Natural killer cell (primary cell): ENCODE measurements at regions of chr9 and their contacts with region 1.

Region 1: DNA sequence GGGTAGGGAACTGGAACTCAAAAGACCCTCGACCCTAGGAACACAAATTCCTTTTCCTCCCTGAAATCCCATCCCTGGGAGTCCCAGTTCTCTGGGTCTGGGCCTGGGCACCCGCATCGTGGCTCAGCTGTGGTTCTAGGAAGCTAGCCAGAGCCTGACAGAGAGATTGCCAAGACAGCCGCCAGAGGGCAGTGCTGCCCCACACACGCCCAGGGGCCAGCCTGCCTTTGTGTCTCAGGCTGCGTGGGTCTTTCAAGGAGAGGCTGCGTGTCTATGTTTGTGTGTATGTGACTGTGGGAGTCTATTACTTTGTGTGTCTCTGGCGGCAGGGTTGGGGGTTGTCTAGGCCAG is 32.0 kb upstream of the TTLL11 start:
- DNase-seq: peak; percentile 78 to 88
- ATAC-seq: peak; percentile 72 to 80 (median 80)
- H3K4me3 ChIP-seq: no peak overlapping the region
- H3K4me3 Mint-ChIP-seq: peak overlapping the region; percentile 80
- H3K27ac ChIP-seq: no peak overlapping the region
- H3K27ac Mint-ChIP-seq: peak overlapping the region in 1 of 2 donors; percentile 62
- H3K4me1 ChIP-seq: peaks cover 35% of the 10 kb centered on the region
- H3K4me1 Mint-ChIP-seq: peaks cover 14 to 30% of the 10 kb centered on the region in 2 donors
- H3K27me3 ChIP-seq: peaks cover 7% of the 10 kb centered on the region
- H3K27me3 Mint-ChIP-seq: peaks cover 13 to 25% of the 10 kb centered on the region in 2 donors
- CTCF ChIP-seq: peak; percentile 82

Region 2: DNA sequence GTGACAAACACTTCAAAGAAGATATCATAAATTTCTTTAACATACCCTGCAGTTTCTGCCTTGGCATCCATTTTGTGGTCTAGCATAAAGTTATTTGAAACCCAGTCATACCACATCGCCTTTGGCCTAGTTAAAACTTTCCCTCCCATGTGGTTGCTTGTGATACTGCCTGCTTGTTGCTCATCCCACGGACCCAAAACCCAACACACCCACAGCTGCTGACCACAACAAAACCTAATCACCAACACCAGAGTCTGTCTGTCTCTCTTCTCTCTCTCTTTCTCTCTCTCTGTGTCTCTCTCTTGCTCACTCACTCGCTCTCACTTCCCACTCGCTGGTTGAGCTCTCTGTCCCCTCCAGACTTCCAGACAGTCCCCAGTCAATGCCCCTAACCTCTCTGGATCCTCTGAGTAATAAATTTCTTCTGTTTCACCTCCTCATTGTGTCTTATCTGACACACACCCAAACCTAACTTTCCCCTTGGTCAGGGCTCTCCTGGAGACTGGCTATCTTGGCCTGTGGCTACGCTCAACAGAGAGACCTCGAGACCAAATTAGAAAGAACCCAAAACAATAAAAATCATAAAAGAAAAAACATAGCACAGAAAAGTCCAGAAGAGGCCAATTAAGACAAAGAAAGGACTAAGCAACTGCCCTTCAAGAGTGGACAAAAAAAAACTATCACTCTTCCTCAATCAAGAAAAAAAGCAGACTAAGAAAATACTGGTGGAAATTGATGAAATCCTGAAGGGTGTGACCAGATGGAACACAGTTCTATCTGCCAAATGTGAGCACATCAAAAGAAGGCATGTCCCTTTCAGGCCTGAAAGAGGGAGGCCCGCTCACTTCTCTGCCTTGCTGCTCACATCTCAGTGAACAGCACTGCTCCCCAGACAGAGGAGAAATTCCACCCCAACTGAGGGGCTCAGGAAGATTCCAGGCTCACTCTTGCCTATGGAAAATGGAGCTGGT is 73.5 kb before region 1 on chr9:
- intact Hi-C with region 1: no loop called
- DNase-seq: no peak
- ATAC-seq: peak in 2 of 3 donors; percentile 46 to 81
- H3K4me3 ChIP-seq: no peak overlapping the region
- H3K4me3 Mint-ChIP-seq: peak overlapping the region; percentile 38
- H3K27ac ChIP-seq: no peak overlapping the region
- H3K27ac Mint-ChIP-seq: peak overlapping the region; percentile 36 to 69
- H3K4me1 ChIP-seq: peaks cover 13% of the 10 kb centered on the region
- H3K4me1 Mint-ChIP-seq: peaks cover 34 to 42% of the 10 kb centered on the region in 2 donors
- H3K27me3 ChIP-seq: no peaks in the 10 kb centered on the region
- H3K27me3 Mint-ChIP-seq: no peaks in the 10 kb centered on the region
- CTCF ChIP-seq: no peak

Region 3: DNA sequence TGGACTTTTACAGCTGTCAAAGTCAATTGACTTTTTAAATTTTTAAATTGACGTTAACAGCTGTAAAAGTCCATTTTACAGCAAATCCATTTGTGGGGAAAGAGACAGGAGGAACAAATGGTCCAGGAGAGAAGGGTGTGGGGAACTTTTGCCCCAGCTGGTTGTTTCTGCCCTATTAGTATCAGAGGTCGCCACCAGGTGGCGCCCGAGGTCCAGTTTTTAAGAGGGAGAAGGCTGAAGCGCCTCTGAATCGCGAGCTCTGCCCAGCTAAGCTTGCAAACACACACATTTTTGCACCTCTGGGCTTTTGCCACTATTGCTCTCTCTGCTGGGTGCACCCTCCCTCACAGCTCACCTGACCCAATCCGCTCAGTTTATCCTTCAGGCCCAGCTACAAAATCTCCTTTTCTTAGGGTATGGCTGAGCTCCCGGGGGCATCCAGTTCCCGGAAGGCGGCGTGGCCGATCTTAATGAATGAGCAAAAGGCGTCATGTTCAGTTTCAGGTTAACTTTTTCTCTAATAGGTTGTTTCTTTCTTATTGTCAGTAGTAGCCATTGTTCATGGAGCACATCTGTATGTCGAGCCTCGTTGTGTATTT is 25.8 kb before region 1 on chr9:
- intact Hi-C with region 1: loop called (anchors 1 kb)
- DNase-seq: peak; percentile 81 to 89
- ATAC-seq: peak; percentile 79 to 91 (median 85)
- H3K4me3 ChIP-seq: no peak overlapping the region
- H3K4me3 Mint-ChIP-seq: no peak overlapping the region
- H3K27ac ChIP-seq: no peak overlapping the region
- H3K27ac Mint-ChIP-seq: no peak overlapping the region
- H3K4me1 ChIP-seq: peaks cover 12% of the 10 kb centered on the region
- H3K4me1 Mint-ChIP-seq: peaks cover 11 to 17% of the 10 kb centered on the region in 2 donors
- H3K27me3 ChIP-seq: no peaks in the 10 kb centered on the region
- H3K27me3 Mint-ChIP-seq: peaks cover 8 to 9% of the 10 kb centered on the region in 2 donors
- CTCF ChIP-seq: peak; percentile 86

Region 4: GRCh38 chr9:122264360-122265148 is 139.4 kb after region 1 on chr9 and contains the starts of genes MRRF and RBM18:
- intact Hi-C with region 1: loop called (anchors 10 kb)
- DNase-seq: peak; percentile 96
- ATAC-seq: peak; percentile 78 to 91 (median 82)
- H3K4me3 ChIP-seq: peak within 1 kb of the TSS; percentile 88
- H3K4me3 Mint-ChIP-seq: peak within 1 kb of the TSS; percentile 99
- H3K27ac ChIP-seq: peak within 1 kb of the TSS; percentile 85
- H3K27ac Mint-ChIP-seq: peak within 1 kb of the TSS; percentile 99 to 100
- H3K4me1 ChIP-seq: peaks cover 13% of the 10 kb centered on the region
- H3K4me1 Mint-ChIP-seq: peaks cover 57% of the 10 kb centered on the region in 2 donors
- H3K27me3 ChIP-seq: no peaks in the 10 kb centered on the region
- H3K27me3 Mint-ChIP-seq: no peaks in the 10 kb centered on the region
- CTCF ChIP-seq: no peak
- total RNA-seq, gene MRRF: 17.7 to 29.9 (median 21.3) TPM
- total RNA-seq, gene RBM18: 24.9 to 30.9 (median 29.7) TPM

Region 5: GRCh38 chr9:122350638-122351355 is 225.7 kb after region 1 on chr9:
- intact Hi-C with region 1: loop called (anchors 1 kb)
- DNase-seq: peak; percentile 78 to 83
- ATAC-seq: peak; percentile 84 to 88 (median 85)
- H3K4me3 ChIP-seq: no peak overlapping the region
- H3K4me3 Mint-ChIP-seq: no peak overlapping the region
- H3K27ac ChIP-seq: no peak overlapping the region
- H3K27ac Mint-ChIP-seq: no peak overlapping the region
- H3K4me1 ChIP-seq: peaks cover 12% of the 10 kb centered on the region
- H3K4me1 Mint-ChIP-seq: peaks cover 0 to 17% of the 10 kb centered on the region in 2 donors
- H3K27me3 ChIP-seq: peaks cover 5% of the 10 kb centered on the region
- H3K27me3 Mint-ChIP-seq: peaks cover 20 to 29% of the 10 kb centered on the region in 2 donors
- CTCF ChIP-seq: peak; percentile 94